CD14-positive monocyte (primary cell): ENCODE measurements at regions of chr3 and their contacts with region 1.

Region 1: GRCh38 chr3:183779896-183780465 is 45.4 kb downstream of the MAP6D1 start:
- DNase-seq: peak; percentile 44 to 55 (median 54)
- H3K4me3 ChIP-seq: peak overlapping the region in 2 of 3 experiments; percentile 17 to 61
- H3K4me3 Mint-ChIP-seq: peak overlapping the region; percentile 37 to 67
- H3K27ac ChIP-seq: peak overlapping the region; percentile 59 to 68
- H3K27ac Mint-ChIP-seq: peak overlapping the region; percentile 31 to 91 (median 86)
- H3K4me1 ChIP-seq: peaks cover 71 to 84% of the 10 kb centered on the region in 2 donors
- H3K4me1 Mint-ChIP-seq: peaks cover 70% of the 10 kb centered on the region
- H3K27me3 ChIP-seq: no peaks in the 10 kb centered on the region
- H3K27me3 Mint-ChIP-seq: no peaks in the 10 kb centered on the region
- CTCF ChIP-seq: no peak

Region 2: GRCh38 chr3:183825456-183826161 is 45.6 kb after region 1 on chr3 and contains the start of gene MAP6D1:
- intact Hi-C with region 1: no loop called
- DNase-seq: peak; percentile 12 to 37 (median 25)
- H3K4me3 ChIP-seq: peak within 1 kb of the TSS; percentile 31 to 76 (median 42)
- H3K4me3 Mint-ChIP-seq: peak within 1 kb of the TSS; percentile 81 to 90
- H3K27ac ChIP-seq: no peak within 1 kb of the TSS
- H3K27ac Mint-ChIP-seq: no peak within 1 kb of the TSS
- H3K4me1 ChIP-seq: peaks cover 15 to 21% of the 10 kb centered on the region in 2 donors
- H3K4me1 Mint-ChIP-seq: peaks cover 16% of the 10 kb centered on the region
- H3K27me3 ChIP-seq: peaks cover 0 to 5% of the 10 kb centered on the region in 2 donors
- H3K27me3 Mint-ChIP-seq: peaks cover 5 to 18% (median 8%) of the 10 kb centered on the region in 3 donors
- CTCF ChIP-seq: peak; percentile 35
- polyA plus RNA-seq, gene MAP6D1: 0.18 to 0.35 TPM in 2 of 3 donors, not detected in the other

Region 3: DNA sequence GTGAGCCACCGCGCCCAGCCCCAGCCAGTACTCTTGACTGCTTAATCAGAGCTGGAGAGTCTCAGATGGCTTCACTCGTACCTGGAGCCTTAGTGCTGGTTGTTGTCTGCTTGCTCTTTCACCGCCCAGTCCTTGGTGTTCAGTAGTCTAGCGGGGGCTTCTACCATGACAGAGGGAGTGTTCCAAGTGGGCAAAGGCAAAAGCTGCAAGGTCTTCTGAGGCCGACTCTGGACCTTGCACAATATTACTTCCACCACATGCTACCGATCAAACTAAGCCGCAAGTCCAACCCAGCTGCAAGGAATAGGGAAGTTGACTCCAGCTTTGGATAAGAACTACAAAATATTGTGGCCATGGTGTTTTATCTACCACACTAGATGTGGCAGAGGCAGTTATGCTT is 98.1 kb after region 1 on chr3:
- intact Hi-C with region 1: loop called (anchors 5 to 10 kb)
- DNase-seq: peak; percentile 79 to 85 (median 84)
- H3K4me3 ChIP-seq: peak overlapping the region in 1 of 3 experiments; percentile 42
- H3K4me3 Mint-ChIP-seq: peak overlapping the region; percentile 27 to 86
- H3K27ac ChIP-seq: peak overlapping the region; percentile 67 to 71
- H3K27ac Mint-ChIP-seq: peak overlapping the region; percentile 87 to 96 (median 95)
- H3K4me1 ChIP-seq: peaks cover 79 to 93% of the 10 kb centered on the region in 2 donors
- H3K4me1 Mint-ChIP-seq: peaks cover 77% of the 10 kb centered on the region
- H3K27me3 ChIP-seq: no peaks in the 10 kb centered on the region
- H3K27me3 Mint-ChIP-seq: peaks cover 0 to 5% (median 0%) of the 10 kb centered on the region in 3 donors
- CTCF ChIP-seq: no peak